T-cell (primary cell): ENCODE measurements at regions of chr11 and their contacts with region 1.

Region 1: GRCh38 chr11:124793466-124794278 is 6.5 kb downstream of the MSANTD2 start:
- DNase-seq: peak in 5 of 35 experiments; percentile 3 to 68 (median 13)
- ATAC-seq: peak in 3 of 4 experiments; percentile 52 to 64 (median 53)
- H3K4me3 ChIP-seq: no peak overlapping the region
- H3K4me3 Mint-ChIP-seq: no peak overlapping the region
- H3K27ac ChIP-seq: no peak overlapping the region
- H3K27ac Mint-ChIP-seq: no peak overlapping the region
- H3K4me1 ChIP-seq: peaks cover 0 to 5% of the 10 kb centered on the region in 2 experiments
- H3K4me1 Mint-ChIP-seq: peaks cover 42 to 50% (median 44%) of the 10 kb centered on the region in 3 donors
- H3K27me3 ChIP-seq: no peaks in the 10 kb centered on the region
- H3K27me3 Mint-ChIP-seq: no peaks in the 10 kb centered on the region

Region 2: DNA sequence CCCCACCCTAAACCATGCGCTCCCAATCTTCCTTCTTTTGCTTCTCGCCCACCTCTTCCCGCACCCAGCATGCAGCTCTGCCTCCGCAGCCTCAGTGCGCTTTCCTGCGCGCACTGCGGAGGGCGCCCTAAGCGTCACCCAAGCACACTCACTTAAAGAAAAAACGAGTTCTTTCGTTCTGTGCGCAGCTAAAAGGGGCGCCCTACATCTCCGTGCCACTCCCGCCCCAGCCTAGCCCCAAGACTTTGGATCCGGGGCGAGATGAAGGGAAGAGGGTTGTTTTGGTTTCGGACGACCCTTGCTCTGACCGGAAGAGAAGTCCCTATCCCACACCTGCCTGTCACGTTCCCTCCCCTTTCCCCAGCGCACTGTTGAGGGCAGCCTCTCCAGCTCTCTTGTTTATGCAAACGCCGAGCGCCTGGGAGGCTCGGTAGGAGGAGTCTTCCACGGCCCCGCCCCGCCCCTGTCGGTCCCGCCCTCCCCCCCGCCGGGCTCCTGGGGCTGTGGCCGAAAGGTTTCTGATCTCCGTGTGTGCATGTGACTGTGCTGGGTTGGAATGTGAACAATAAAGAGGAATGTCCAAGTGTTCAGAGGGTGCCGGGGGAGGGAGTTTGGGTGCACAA is 46.9 kb before region 1 on chr11:
- CTCF ChIA-PET with region 1: interaction called, 3 to 11 read pairs
- POLR2A ChIA-PET with region 1: no interaction called
- DNase-seq: peak; percentile 57 to 86 (median 72)
- ATAC-seq: peak; percentile 88 to 91 (median 89)
- H3K4me3 ChIP-seq: peak overlapping the region; percentile 76 to 99
- H3K4me3 Mint-ChIP-seq: peak overlapping the region; percentile 93 to 97 (median 97)
- H3K27ac ChIP-seq: peak overlapping the region; percentile 70
- H3K27ac Mint-ChIP-seq: peak overlapping the region; percentile 91 to 98
- H3K4me1 ChIP-seq: peaks cover 2 to 23% of the 10 kb centered on the region in 2 experiments
- H3K4me1 Mint-ChIP-seq: peaks cover 13 to 29% (median 16%) of the 10 kb centered on the region in 3 donors
- H3K27me3 ChIP-seq: peaks cover 0 to 14% of the 10 kb centered on the region in 2 experiments
- H3K27me3 Mint-ChIP-seq: peaks cover 2 to 6% of the 10 kb centered on the region in 2 donors